Activated CD8-positive, alpha-beta T cell treated with anti-CD3 and anti-CD28 coated beads for 36 hours (primary cell): ENCODE measurements at regions of chr5 and their contacts with region 1.

Region 1: DNA sequence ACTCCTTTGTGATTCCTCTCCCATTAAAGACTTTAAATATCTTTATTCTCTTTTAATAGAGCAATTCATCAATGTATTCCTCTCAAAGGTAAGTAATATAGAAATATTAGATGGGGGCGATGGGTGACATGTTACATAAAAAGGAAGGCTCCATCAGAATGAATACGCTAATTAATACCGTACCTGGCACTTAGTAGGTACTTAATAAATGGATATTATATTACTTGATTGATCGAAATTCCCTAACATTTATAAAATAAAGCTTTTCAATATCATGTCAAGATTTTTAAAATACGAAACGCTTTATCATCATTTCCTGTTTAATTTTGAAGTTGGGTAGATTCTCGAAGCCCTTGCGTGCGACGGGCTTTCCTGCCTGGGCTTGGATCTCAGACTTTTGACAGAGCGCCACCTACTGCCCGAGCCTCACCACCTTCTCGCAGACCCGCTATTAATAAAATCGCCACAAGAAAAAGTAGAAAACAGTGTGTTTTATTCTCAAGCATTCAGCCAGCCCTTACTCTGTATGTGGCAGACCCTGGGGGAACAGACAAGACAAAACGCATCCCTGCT is 99.4 kb downstream of the C5orf15 start:
- DNase-seq: peak; percentile 94
- ATAC-seq: peak; percentile 87
- H3K4me3 Mint-ChIP-seq: no peak overlapping the region
- H3K27ac Mint-ChIP-seq: peak overlapping the region; percentile 9
- H3K4me1 Mint-ChIP-seq: peaks cover 24% of the 10 kb centered on the region
- H3K27me3 Mint-ChIP-seq: peaks cover 1% of the 10 kb centered on the region
- CTCF ChIP-seq: peak; percentile 85

Region 2: DNA sequence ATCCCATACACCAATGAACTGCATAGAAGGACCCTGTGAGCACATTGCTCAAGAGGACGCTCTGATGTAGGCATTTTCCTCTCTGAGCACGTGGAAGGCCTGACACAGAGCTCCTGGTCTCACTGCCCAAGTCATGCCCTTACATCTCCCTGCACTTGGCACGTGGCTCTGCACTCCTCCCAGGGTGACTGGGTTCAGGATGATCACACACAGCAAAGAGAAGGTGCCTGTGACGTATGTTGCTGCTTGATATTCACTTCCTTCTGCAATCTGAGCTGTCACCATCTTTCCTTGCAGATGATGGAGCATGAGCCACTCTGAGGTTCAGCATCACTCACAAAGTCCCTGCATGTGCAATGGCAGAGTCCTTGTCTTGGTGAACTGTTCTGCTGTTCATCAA is 381.9 kb before region 1 on chr5:
- CTCF ChIA-PET with region 1: interaction called, 11 read pairs
- POLR2A ChIA-PET with region 1: no interaction called
- intact Hi-C with region 1: no loop called
- DNase-seq: no peak
- ATAC-seq: no peak
- H3K4me3 Mint-ChIP-seq: no peak overlapping the region
- H3K27ac Mint-ChIP-seq: no peak overlapping the region
- H3K4me1 Mint-ChIP-seq: peaks cover 6% of the 10 kb centered on the region
- H3K27me3 Mint-ChIP-seq: peaks cover 3% of the 10 kb centered on the region
- CTCF ChIP-seq: no peak

Region 3: GRCh38 chr5:133754575-133755169 is 114.4 kb before region 1 on chr5:
- CTCF ChIA-PET with region 1: interaction called, 34 read pairs
- POLR2A ChIA-PET with region 1: no interaction called
- intact Hi-C with region 1: loop called (anchors 10 kb)
- DNase-seq: peak; percentile 53
- ATAC-seq: peak; percentile 66
- H3K4me3 Mint-ChIP-seq: no peak overlapping the region
- H3K27ac Mint-ChIP-seq: no peak overlapping the region
- H3K4me1 Mint-ChIP-seq: peaks cover 4% of the 10 kb centered on the region
- H3K27me3 Mint-ChIP-seq: peaks cover 15% of the 10 kb centered on the region
- CTCF ChIP-seq: peak; percentile 61

Region 4: DNA sequence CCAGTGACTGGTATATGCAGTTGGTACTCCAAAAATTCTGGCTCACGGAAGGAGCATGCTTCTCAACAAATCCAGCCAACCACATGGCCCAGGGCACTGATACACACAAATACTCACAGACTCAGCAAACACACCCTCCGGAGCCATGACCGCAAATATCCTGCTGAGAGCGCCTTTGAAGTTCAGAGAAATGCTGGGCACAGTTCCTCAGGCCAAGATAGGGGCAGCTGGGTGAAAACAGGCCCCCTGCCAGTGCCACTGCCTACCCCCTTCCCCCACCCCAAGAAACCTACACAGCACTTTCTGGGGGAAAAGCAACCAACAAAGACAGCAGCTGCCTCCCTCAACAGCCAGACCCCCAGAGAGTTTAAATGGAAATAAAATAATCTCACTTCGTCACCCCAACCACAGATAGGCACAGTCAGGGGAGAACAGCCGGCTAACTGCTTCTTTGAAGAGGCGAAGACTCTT is 20.7 kb before region 1 on chr5:
- CTCF ChIA-PET with region 1: interaction called, 26 read pairs
- POLR2A ChIA-PET with region 1: no interaction called
- intact Hi-C with region 1: no loop called
- DNase-seq: peak; percentile 27
- ATAC-seq: peak; percentile 39
- H3K4me3 Mint-ChIP-seq: no peak overlapping the region
- H3K27ac Mint-ChIP-seq: peak overlapping the region; percentile 60
- H3K4me1 Mint-ChIP-seq: peaks cover 11% of the 10 kb centered on the region
- H3K27me3 Mint-ChIP-seq: peaks cover 4% of the 10 kb centered on the region
- CTCF ChIP-seq: no peak

Region 5: GRCh38 chr5:133892774-133893173 is 23.7 kb after region 1 on chr5:
- CTCF ChIA-PET with region 1: interaction called, 13 read pairs
- POLR2A ChIA-PET with region 1: no interaction called
- intact Hi-C with region 1: no loop called
- DNase-seq: no peak
- ATAC-seq: no peak
- H3K4me3 Mint-ChIP-seq: no peak overlapping the region
- H3K27ac Mint-ChIP-seq: no peak overlapping the region
- H3K4me1 Mint-ChIP-seq: peaks cover 4% of the 10 kb centered on the region
- H3K27me3 Mint-ChIP-seq: no peaks in the 10 kb centered on the region
- CTCF ChIP-seq: no peak